ENCODE measurements at regions of chr13 and their contacts with region 1.

Region 1: DNA sequence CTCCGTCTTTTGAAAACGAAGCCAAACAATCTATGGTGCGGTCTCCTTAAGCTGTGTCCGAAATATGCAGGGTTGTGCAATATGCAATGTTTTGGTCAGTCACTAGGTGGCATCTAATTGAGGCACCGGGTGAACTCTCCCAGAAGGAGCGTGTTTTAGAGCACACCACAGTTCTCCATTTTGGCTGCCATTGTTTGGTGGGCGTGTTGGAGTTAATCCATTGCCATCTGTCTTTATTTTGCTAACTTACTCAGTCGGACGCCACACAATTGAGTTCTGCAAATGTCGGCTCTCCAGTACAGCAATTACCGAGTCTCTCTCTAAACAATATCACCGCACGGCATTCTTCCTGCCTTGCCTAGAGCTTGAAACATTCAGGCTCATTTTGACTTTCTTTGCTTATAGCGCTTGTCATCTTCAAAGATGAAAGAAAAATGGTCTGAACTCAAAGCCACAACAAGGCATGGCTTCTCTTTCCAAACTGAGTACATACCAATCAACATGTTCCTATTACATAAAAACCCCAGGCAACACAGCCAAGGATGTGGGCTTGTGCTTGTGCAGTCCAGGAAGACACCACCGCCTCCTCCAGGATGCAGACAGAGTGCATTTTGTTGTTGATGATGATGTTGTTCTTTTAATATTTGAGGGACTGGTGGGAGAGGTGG is 182.0 kb upstream of the SERP2 start:
- DNase-seq: no peak

Region 2: DNA sequence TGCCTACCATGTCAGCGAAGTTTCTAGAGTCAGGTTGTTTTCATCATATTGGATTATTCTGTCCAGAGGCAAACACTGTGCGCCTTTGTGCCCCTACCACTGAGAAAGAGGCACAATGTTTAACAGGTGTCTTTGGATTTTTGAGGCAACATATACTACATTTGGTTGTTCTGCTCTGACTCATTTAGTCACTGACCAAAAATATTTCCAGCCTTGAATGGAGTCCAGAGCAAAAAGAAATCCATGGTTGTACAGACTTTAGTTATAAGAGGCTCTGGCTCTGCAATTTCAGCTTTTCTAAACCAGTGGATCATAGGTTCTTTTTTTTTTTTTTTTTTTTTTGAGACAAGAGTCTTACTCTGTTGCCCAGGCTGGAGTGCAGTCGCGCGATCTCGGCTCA is 276.2 kb before region 1 on chr13:
- intact Hi-C with region 1: loop called (anchors 10 kb)
- DNase-seq: no peak

Region 3: DNA sequence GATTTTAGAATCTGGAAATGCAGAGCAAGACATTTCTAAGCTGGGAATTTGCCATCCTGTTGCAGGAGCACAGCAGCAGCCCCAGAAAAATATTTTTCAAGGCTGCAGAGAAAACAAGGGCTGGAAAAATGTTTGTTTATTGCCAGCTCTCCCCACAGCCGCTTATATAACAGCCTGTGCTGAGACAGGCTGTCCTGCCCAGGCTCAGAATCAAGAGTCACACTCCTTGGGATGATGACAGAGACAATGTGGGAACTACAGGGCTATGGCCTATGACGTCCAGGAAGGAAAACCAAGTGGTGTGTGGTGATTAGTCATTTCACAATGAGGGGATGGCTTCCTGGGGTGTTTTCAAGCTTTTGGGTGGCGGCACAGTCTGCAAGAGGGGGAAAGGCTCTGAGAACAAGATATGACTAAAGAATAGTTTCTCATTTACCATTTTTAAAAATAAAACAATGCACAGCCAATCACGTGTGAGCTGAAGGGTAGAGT is 45.7 kb after region 1 on chr13:
- intact Hi-C with region 1: loop called (anchors 5 kb)
- DNase-seq: no peak